Lower leg skin (tissue), 4 donors: ENCODE measurements at regions of chr14 and their contacts with region 1.

Region 1: DNA sequence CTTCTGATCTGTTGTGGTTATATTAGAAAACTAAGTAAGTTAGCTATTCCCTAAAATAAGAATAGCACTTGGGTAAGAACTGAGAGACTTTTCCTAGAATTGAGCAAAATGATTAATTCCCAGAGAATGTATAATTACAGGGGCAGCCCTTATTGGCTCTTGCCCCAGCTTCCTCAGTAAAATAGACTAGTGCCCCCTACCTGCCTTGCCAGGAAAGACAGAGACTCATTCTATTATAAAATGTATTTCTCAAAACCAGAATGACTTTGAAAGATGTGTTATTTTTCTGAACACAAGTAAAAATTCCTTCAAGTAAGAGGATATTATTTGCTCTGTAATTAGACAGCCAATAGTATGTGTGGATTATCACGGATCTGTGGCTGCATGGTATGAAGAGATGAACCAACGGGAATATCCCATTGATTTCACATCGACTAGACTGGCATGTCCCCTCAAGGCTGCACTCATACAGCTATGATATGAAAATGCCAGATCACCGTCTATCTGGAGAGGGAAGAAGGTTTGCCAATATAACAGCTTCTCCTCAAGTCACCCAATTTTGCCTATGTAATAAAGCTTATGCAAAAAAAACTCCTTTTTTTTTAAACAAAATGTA is 7.4 kb upstream of the GLRX5 start:
- DNase-seq: peak; percentile 69 to 90
- H3K4me3 ChIP-seq: no peak overlapping the region
- CTCF ChIP-seq: peak in 1 of 3 donors; percentile 87
- POLR2A ChIP-seq: no peak

Region 2: GRCh38 chr14:95196290-95196689 is 331.2 kb before region 1 on chr14:
- intact Hi-C with region 1: no loop called
- DNase-seq: no peak
- H3K4me3 ChIP-seq: no peak overlapping the region
- CTCF ChIP-seq: no peak
- POLR2A ChIP-seq: no peak

Region 3: DNA sequence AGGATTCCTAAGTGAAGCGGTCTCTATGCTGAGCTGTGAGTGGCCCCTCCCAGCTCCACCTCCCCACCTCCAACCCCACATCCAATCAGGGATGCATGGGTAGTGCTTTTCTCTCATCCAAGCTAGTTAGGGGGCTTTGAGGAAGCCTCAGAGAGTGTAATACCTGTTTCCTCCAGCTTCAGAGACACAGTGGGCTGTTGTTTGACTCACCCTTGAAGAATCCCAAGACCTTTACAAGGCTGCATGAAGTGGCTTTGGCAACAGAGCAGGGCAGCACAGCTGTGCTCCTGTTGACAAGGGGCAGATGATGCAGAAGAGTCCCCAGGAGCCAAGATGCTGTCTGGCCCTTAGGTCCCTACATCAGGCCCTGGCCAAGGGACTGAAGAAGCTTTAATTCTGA is 180.7 kb before region 1 on chr14:
- intact Hi-C with region 1: no loop called
- DNase-seq: no peak
- H3K4me3 ChIP-seq: no peak overlapping the region
- CTCF ChIP-seq: no peak
- POLR2A ChIP-seq: no peak

Region 4: DNA sequence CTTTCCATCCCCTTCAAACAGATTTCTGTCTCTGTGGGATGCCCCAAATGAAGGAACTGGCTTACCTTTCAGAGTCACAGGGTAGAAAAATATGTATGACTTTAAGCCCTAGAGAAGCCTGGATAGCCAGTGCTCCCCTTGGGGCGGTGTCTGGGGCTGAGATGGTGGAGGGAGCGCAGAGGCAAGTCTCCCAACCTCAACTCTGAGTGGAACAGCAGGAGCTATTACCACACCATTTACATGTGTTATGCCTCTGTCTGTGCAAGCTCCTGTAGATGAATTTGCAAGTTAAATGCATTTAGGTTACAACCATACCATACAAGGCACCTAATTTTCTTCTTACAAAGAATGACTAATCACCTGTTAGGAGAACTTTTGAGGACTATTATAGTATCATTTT is 157.4 kb before region 1 on chr14:
- intact Hi-C with region 1: no loop called
- DNase-seq: no peak
- H3K4me3 ChIP-seq: no peak overlapping the region
- CTCF ChIP-seq: no peak
- POLR2A ChIP-seq: no peak

Region 5: DNA sequence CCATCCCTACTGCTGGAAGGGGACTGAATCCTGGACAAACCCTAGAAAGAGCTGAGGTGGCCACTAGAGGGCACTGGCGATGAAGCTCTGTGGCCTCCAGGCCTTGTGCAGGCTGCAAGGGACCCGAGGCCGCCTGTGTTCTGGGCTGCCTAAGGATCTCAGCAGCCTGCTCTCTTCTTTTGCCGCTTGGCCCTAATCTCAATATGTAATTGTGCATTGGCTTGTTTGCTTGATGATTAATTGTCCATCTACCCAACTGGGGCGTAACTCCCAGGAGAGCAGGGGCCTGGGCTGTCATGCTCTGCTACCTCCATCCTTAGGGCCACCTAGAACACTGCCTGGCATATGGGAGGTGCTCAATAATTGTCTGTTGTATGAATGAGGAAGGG is 84.9 kb before region 1 on chr14:
- intact Hi-C with region 1: loop called (anchors 5 kb)
- DNase-seq: peak; percentile 80 to 94
- H3K4me3 ChIP-seq: no peak overlapping the region
- CTCF ChIP-seq: peak in 1 of 3 donors; percentile 83
- POLR2A ChIP-seq: no peak